Right cardiac atrium (tissue), 5 donors: ENCODE measurements at regions of chr12 and their contacts with region 1.

Region 1: DNA sequence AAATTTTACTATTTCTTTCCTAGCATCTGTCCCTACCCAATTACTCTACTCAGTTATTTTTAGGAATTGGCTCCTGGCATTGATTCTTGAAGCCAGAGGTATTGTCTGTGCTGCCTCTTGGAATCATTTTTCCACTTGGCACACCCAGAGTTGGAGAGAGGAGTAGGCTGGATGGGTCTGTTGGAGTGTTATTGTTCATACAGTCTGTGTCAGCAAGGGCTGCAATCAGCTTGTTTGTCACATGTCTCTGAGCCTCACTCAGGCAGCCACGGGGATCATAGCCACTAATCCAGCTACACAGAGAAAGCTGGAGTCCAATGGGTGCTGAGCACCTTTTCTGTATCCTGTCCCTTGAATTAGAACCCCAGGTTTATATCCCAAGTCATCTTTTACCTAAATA is 176.0 kb upstream of the DYRK2 start:
- DNase-seq: peak in 2 of 3 donors; percentile 27 to 68
- ATAC-seq: peak; percentile 92 to 94
- H3K4me3 ChIP-seq: no peak overlapping the region
- H3K27ac ChIP-seq: no peak overlapping the region
- H3K4me1 ChIP-seq: peaks cover 4% of the 10 kb centered on the region
- H3K27me3 ChIP-seq: no peaks in the 10 kb centered on the region

Region 2: DNA sequence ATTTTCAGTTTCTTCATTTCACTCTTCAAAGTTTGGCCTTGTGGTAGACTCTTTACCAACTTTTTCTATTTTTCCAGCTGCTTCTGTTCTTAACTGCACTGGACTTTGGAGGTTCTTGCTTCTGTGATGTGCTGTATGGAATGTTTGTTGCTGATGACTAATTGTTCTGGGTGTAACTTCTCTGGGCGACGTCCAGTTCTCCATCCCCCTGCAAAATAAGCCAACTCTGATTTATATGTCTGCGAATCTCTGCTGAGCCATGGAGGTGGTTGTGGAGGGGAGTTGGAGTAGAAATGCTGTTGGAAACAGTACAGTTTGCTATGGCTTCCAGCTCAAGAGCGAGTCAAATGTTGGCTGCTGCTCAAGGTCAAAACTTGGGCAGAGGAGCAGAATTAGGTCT is 62.1 kb after region 1 on chr12:
- intact Hi-C with region 1: loop called in 1 of 4 experiments (anchors 10 kb)
- DNase-seq: peak in 2 of 3 donors; percentile 51 to 62
- ATAC-seq: peak; percentile 79 to 84
- H3K4me3 ChIP-seq: no peak overlapping the region
- H3K27ac ChIP-seq: no peak overlapping the region
- H3K4me1 ChIP-seq: no peaks in the 10 kb centered on the region
- H3K27me3 ChIP-seq: no peaks in the 10 kb centered on the region

Region 3: GRCh38 chr12:67625004-67625403 is 152.5 kb after region 1 on chr12:
- intact Hi-C with region 1: no loop called
- DNase-seq: no peak
- ATAC-seq: no peak
- H3K4me3 ChIP-seq: no peak overlapping the region
- H3K27ac ChIP-seq: no peak overlapping the region
- H3K4me1 ChIP-seq: no peaks in the 10 kb centered on the region
- H3K27me3 ChIP-seq: no peaks in the 10 kb centered on the region